Panc1 (cell line): ENCODE measurements at regions of chr10 and their contacts with region 1.

Region 1: DNA sequence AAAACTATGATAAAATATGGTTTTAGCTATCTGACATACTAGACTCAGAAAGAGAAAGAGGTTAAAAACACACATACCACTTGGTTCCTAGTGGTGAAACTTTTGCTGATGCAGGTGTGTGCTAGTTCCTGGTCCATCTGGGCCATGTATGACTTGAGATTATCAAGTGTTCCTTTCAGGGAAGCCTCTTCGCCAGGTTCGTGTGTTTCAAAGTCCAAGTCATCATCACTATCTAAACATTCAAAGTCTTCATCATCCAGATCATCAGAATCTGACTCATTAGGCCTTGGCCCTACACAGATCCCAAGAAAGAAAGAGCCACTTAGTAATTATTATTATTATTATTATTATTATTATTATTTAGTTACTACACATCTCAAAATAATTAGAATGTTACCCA is 26.4 kb downstream of the NUDT13 start:
- DNase-seq: no peak
- ATAC-seq: no peak
- H3K4me3 ChIP-seq: no peak overlapping the region
- H3K27ac ChIP-seq: no peak overlapping the region
- H3K4me1 ChIP-seq: peaks cover 7% of the 10 kb centered on the region
- H3K27me3 ChIP-seq: no peaks in the 10 kb centered on the region
- CTCF ChIP-seq: no peak

Region 2: DNA sequence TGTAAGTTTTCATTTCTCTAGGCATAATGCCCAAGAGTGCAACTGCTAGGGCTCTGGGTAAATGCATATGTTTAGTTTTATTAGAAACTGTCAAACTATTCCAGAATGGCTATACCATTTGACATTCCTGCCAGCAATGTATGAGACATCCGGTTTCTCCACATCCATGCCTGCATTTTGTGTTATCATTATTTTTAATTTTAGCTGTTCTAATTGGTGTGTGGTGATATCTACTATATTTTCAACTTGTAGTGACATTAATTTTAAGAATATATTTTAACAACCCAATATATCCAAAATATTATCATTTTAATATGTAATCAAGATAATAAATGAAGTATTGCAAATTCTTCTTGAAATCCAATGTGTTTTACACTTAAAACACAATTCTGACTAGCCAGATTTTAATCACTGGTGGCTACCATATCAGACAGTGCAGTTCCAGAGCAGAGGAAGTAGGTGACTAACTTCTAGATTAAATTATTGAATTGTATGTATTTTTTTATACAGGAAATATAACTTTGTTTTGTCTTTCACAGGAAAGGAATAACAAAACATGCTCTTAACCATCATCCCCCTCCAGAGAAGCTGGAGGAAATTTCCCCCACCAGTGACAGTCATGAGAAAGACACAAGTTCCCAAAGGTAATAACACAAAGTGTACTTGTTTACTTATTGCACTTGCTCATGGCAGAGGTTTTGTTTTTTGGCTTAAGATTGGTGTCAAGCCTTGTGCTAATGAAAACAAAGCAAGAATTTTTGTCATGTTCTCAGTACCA is 37.7 kb after region 1 on chr10:
- CTCF ChIA-PET with region 1: interaction called, 13 read pairs
- POLR2A ChIA-PET with region 1: no interaction called
- in situ Hi-C with region 1: no loop called
- intact Hi-C with region 1: no loop called
- DNase-seq: no peak
- ATAC-seq: no peak
- H3K4me3 ChIP-seq: no peak overlapping the region
- H3K27ac ChIP-seq: no peak overlapping the region
- H3K4me1 ChIP-seq: no peaks in the 10 kb centered on the region
- H3K27me3 ChIP-seq: no peaks in the 10 kb centered on the region
- CTCF ChIP-seq: no peak

Region 3: GRCh38 chr10:73730153-73730906 is 593.7 kb after region 1 on chr10:
- CTCF ChIA-PET with region 1: no interaction called
- POLR2A ChIA-PET with region 1: interaction called, 11 read pairs
- in situ Hi-C with region 1: no loop called
- intact Hi-C with region 1: no loop called
- DNase-seq: peak; percentile 90
- ATAC-seq: peak; percentile 97
- H3K4me3 ChIP-seq: peak overlapping the region; percentile 94 to 96
- H3K27ac ChIP-seq: peak overlapping the region; percentile 97
- H3K4me1 ChIP-seq: no peaks in the 10 kb centered on the region; the same call in 1 of the 2 replicates
- H3K27me3 ChIP-seq: no peaks in the 10 kb centered on the region
- CTCF ChIP-seq: no peak

Region 4: GRCh38 chr10:74596713-74597112 is 1460.1 kb after region 1 on chr10:
- CTCF ChIA-PET with region 1: no interaction called
- POLR2A ChIA-PET with region 1: interaction called, 15 read pairs
- in situ Hi-C with region 1: no loop called
- intact Hi-C with region 1: no loop called
- DNase-seq: no peak
- ATAC-seq: no peak
- H3K4me3 ChIP-seq: no peak overlapping the region
- H3K27ac ChIP-seq: no peak overlapping the region
- H3K4me1 ChIP-seq: no peaks in the 10 kb centered on the region
- H3K27me3 ChIP-seq: no peaks in the 10 kb centered on the region
- CTCF ChIP-seq: no peak